OCI-LY7 (cell line): ENCODE measurements at regions of chr11 and their contacts with region 1.

Region 1: GRCh38 chr11:112280268-112281126 is 19.8 kb upstream of the PLET1 start:
- DNase-seq: peak; percentile 90
- H3K4me3 ChIP-seq: peak overlapping the region; percentile 65
- H3K27ac ChIP-seq: no peak overlapping the region
- H3K4me1 ChIP-seq: peaks cover 10% of the 10 kb centered on the region
- CTCF ChIP-seq: peak; percentile 83

Region 2: DNA sequence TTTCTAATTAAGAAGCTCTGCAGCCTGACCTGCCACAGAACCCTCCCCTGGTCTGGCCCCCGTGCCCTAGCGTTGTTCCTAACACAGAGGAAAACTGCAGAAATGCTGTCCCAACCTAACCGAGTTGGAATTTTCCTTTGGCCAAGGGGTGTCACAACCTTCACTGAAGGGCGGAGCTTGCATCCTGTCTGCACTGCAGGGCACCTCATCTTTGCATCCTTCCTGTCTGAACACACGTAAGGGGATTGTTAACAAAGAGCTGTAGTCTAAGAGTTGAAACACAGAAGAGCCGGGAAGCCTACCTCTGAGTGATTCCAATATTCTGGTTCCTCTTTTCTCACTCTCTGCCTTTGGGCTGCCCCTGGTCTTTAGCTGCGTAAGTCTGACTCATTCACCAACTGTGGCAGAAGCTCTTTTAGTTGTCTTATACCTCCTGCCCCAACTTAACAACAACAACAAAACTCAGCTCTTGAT is 341.8 kb before region 1 on chr11:
- CTCF ChIA-PET with region 1: no interaction called
- POLR2A ChIA-PET with region 1: interaction called, 3 read pairs
- intact Hi-C with region 1: loop called (anchors 5 kb)
- DNase-seq: peak; percentile 67
- H3K4me3 ChIP-seq: peak overlapping the region; percentile 70
- H3K27ac ChIP-seq: peak overlapping the region; percentile 39
- H3K4me1 ChIP-seq: peaks cover 42% of the 10 kb centered on the region
- CTCF ChIP-seq: no peak

Region 3: DNA sequence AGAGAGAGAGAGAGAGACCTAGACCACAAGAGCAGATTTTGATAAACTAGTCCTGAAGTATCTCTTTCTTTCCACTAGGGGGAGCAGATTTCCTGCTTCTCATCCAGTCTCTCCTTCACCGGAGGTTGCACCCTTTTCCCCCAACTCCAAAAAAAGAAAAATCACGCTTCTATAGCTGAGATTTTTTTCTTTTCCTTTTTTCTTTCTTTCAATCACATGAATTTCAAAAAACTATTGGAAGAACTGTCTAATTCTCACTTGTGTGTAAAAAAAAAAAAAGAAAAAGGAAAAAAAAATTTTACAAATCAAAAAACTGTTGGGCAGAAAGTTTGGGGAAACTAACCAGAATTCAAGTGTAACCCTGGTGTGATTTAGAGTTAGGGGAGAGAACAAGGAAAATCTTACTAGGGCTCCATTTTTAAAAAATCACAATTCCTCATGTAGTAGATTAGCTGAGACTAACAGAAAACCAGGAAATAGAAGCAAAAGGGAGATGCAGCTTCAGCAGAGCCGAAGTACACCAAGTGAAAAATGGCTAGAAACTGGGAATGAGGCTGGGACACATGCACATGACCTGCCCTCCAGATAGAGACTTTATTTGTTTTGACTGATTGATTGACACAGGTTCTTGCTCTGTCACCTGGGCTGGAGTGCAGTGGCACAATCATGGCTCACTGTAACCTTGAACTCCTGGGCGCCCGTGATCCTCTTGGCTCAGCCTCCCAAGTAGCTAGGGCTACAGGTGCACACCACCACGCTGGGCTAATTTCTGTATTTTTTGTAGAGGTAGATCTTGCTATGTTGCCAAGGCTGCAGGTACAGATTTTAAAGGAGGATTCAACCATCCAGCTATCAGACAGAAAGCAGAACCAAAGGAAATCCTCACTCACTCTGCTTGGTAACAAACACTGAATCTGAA is 166.7 kb before region 1 on chr11:
- CTCF ChIA-PET with region 1: interaction called, 5 read pairs
- POLR2A ChIA-PET with region 1: interaction called, 3 read pairs
- intact Hi-C with region 1: loop called (anchors 2 kb)
- DNase-seq: peak; percentile 67
- H3K4me3 ChIP-seq: no peak overlapping the region
- H3K27ac ChIP-seq: no peak overlapping the region
- H3K4me1 ChIP-seq: no peaks in the 10 kb centered on the region
- CTCF ChIP-seq: peak; percentile 84

Region 4: GRCh38 chr11:112219476-112220232 is 60.8 kb before region 1 on chr11:
- CTCF ChIA-PET with region 1: interaction called, 23 read pairs
- POLR2A ChIA-PET with region 1: interaction called, 5 read pairs
- intact Hi-C with region 1: loop called (anchors 1 kb)
- DNase-seq: peak; percentile 79
- H3K4me3 ChIP-seq: no peak overlapping the region
- H3K27ac ChIP-seq: no peak overlapping the region
- H3K4me1 ChIP-seq: no peaks in the 10 kb centered on the region
- CTCF ChIP-seq: peak; percentile 88

Region 5: GRCh38 chr11:112511271-112511670 is 230.8 kb after region 1 on chr11:
- CTCF ChIA-PET with region 1: no interaction called
- POLR2A ChIA-PET with region 1: no interaction called
- intact Hi-C with region 1: no loop called
- DNase-seq: no peak
- H3K4me3 ChIP-seq: no peak overlapping the region
- H3K27ac ChIP-seq: no peak overlapping the region
- H3K4me1 ChIP-seq: no peaks in the 10 kb centered on the region
- CTCF ChIP-seq: no peak

Region 6: DNA sequence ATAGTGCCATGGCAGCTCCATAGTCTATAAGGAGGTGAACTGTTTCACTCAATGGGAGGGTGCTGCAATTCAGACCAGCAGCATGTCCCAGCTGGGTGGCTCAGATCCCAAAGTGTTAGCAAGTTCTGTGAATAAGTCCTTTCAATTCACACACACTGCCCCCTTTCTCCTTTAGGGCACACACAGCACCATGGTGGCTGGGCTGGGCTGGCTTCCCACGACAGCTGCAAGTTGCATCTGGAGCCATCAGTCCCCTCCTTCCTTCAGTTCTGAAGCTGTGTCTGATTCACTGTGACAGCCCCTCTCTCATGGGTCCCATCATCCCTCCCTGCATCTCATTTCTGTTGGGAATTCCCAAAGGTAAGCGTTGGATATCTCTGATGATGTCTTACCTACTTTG is 356.6 kb after region 1 on chr11:
- CTCF ChIA-PET with region 1: no interaction called
- POLR2A ChIA-PET with region 1: no interaction called
- intact Hi-C with region 1: no loop called
- DNase-seq: no peak
- H3K4me3 ChIP-seq: no peak overlapping the region
- H3K27ac ChIP-seq: no peak overlapping the region
- H3K4me1 ChIP-seq: no peaks in the 10 kb centered on the region
- CTCF ChIP-seq: no peak

Region 7: GRCh38 chr11:113289431-113290187 is 1009.1 kb after region 1 on chr11:
- CTCF ChIA-PET with region 1: no interaction called
- POLR2A ChIA-PET with region 1: no interaction called
- intact Hi-C with region 1: loop called (anchors 10 kb)
- DNase-seq: peak; percentile 47
- H3K4me3 ChIP-seq: no peak overlapping the region
- H3K27ac ChIP-seq: no peak overlapping the region
- H3K4me1 ChIP-seq: no peaks in the 10 kb centered on the region
- CTCF ChIP-seq: peak; percentile 84